ENCODE measurements at regions of chr19 and their contacts with region 1.

Region 1: GRCh38 chr19:3062168-3063102 is at the start of gene TLE5:
- DNase-seq: peak; percentile 68
- H3K4me3 Mint-ChIP-seq: peak within 1 kb of the TSS; percentile 91
- H3K27ac Mint-ChIP-seq: peak within 1 kb of the TSS; percentile 99
- H3K4me1 Mint-ChIP-seq: peaks cover 20% of the 10 kb centered on the region
- H3K27me3 Mint-ChIP-seq: no peaks in the 10 kb centered on the region
- total RNA-seq, gene TLE5: 378 and 399 TPM in 2 replicates

Region 2: DNA sequence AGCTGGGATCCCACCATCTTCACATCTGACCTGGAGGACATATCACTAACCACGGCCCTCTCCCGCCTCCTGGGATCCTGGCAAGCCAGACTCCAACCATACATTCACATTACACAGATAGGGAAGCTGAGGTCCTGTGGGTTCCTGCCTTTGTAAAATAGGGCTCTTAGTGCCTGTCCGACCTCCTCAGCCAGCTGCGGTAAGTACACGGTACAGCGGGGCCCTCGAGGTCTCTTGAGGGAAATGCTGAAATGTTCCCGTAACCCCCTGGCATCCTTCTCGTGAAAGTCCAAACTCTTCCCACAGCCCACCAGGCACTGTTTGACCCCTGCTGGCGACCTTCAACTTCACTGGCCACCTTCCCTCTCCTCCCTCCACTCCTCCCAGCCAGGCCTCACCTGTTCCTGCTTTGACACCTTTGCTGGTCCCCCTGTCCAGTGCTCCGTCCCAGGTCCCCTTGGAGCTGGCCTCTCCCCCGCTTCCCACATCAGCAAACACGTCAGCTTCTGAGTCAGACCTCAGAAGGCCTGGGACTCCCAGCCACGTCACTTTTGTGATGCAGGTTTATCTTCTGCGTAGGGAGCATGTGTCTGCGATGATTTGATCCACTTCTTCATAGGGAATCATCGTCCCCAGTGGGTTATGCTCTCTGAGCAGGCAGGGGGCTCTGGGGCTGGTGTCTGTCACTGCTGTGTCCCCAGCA is 351.1 kb before region 1 on chr19:
- intact Hi-C with region 1: no loop called
- DNase-seq: no peak
- H3K4me3 Mint-ChIP-seq: no peak overlapping the region
- H3K27ac Mint-ChIP-seq: no peak overlapping the region
- H3K4me1 Mint-ChIP-seq: no peaks in the 10 kb centered on the region
- H3K27me3 Mint-ChIP-seq: peaks cover 2% of the 10 kb centered on the region

Region 3: GRCh38 chr19:3047425-3048189 is 14.8 kb before region 1 on chr19:
- intact Hi-C with region 1: loop called (anchors 2 kb)
- DNase-seq: peak; percentile 41
- H3K4me3 Mint-ChIP-seq: peak overlapping the region; percentile 83
- H3K27ac Mint-ChIP-seq: peak overlapping the region; percentile 69
- H3K4me1 Mint-ChIP-seq: peaks cover 8% of the 10 kb centered on the region
- H3K27me3 Mint-ChIP-seq: peaks cover 14% of the 10 kb centered on the region

Region 4: DNA sequence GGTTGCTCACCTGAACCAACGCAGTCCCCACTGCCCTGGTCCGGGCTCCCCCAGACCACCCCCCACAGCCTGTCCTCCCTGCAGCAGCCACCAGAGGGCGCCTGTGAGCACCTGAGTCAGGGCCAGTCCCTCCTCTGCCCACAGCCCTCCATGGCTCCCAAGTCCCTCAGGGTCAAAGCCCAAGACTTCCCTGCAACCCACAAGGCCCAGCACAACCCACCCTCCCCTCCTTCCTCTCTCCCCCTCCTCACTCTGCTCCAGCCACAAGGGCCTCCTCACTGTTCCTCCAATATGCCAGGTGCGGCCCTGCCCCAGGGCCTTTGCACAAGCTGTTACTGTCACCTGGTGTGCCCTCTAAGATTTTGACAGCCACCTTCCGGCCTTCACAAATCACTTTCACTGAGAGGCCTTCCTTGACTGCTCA is 84.3 kb after region 1 on chr19:
- intact Hi-C with region 1: no loop called
- DNase-seq: peak; percentile 53
- H3K4me3 Mint-ChIP-seq: no peak overlapping the region
- H3K27ac Mint-ChIP-seq: peak overlapping the region; percentile 18
- H3K4me1 Mint-ChIP-seq: peaks cover 38% of the 10 kb centered on the region
- H3K27me3 Mint-ChIP-seq: no peaks in the 10 kb centered on the region